Natural killer cell (primary cell): ENCODE measurements at regions of chr7 and their contacts with region 1.

Region 1: DNA sequence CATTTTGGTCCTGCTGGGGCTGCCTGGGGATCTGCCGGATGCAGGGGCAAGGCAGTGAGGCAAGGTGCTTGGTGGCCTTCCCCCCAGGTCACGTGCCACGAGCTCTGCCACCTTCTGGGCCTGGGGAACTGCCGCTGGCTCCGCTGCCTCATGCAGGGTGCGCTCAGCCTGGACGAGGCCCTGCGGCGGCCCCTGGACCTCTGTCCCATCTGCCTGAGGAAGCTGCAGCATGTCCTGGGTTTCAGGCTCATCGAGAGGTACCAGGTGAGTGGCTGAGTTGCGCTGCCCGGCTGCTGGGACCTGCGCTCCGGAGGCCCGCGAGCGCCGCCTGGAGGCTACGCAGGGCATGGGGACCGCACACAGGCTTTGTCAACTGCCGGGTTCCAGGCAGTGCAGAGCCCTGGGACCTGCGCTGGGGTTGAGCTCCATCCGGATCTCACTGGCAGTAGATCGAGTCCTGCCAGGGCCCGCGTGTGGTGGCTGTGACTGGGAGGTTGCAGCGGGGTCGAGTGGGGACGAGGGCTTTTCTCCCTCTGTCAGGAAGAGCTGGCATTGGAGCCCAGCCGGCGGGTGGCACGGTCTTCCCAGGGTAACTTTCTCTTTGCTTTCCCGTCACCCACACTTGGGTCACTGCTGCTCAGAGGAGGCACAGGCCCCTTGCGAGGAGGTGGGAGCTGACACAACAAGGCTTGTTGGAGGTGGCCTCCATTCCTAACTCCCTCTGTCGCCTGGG is 21.7 kb downstream of the AMZ1 start:
- DNase-seq: peak; percentile 71 to 89
- ATAC-seq: peak; percentile 79 to 87 (median 81)
- H3K4me3 ChIP-seq: peak overlapping the region; percentile 15
- H3K4me3 Mint-ChIP-seq: peak overlapping the region; percentile 45
- H3K27ac ChIP-seq: peak overlapping the region; percentile 54
- H3K27ac Mint-ChIP-seq: no peak overlapping the region
- H3K4me1 ChIP-seq: peaks cover 36% of the 10 kb centered on the region
- H3K4me1 Mint-ChIP-seq: peaks cover 22 to 25% of the 10 kb centered on the region in 2 donors
- H3K27me3 ChIP-seq: peaks cover 30% of the 10 kb centered on the region
- H3K27me3 Mint-ChIP-seq: peaks cover 51 to 73% of the 10 kb centered on the region in 2 donors
- CTCF ChIP-seq: peak; percentile 92

Region 2: GRCh38 chr7:2670720-2671391 is 38.9 kb before region 1 on chr7:
- intact Hi-C with region 1: loop called (anchors 5 kb)
- DNase-seq: peak; percentile 57 to 82
- ATAC-seq: peak; percentile 68 to 96 (median 91)
- H3K4me3 ChIP-seq: no peak overlapping the region
- H3K4me3 Mint-ChIP-seq: peak overlapping the region; percentile 45
- H3K27ac ChIP-seq: no peak overlapping the region
- H3K27ac Mint-ChIP-seq: peak overlapping the region in 1 of 2 donors; percentile 56
- H3K4me1 ChIP-seq: peaks cover 7% of the 10 kb centered on the region
- H3K4me1 Mint-ChIP-seq: peaks cover 9 to 24% of the 10 kb centered on the region in 2 donors
- H3K27me3 ChIP-seq: peaks cover 6% of the 10 kb centered on the region
- H3K27me3 Mint-ChIP-seq: peaks cover 19 to 27% of the 10 kb centered on the region in 2 donors
- CTCF ChIP-seq: peak; percentile 88